H1 (cell line): ENCODE measurements at regions of chr6 and their contacts with region 1.

Region 1: GRCh38 chr6:83215131-83216047 is 22.2 kb downstream of the RWDD2A start:
- DNase-seq: no peak
- H3K4me3 ChIP-seq: no peak overlapping the region
- H3K27ac ChIP-seq: no peak overlapping the region
- H3K4me1 ChIP-seq: no peaks in the 10 kb centered on the region
- H3K27me3 ChIP-seq: no peaks in the 10 kb centered on the region
- CTCF ChIP-seq: peak; percentile 55 to 83 (median 80)
- EP300 ChIP-seq: no peak
- POLR2A ChIP-seq: no peak
- RAD21 ChIP-seq: peak; percentile 78 to 88

Region 2: GRCh38 chr6:83019741-83020140 is 195.6 kb before region 1 on chr6:
- CTCF ChIA-PET with region 1: no interaction called
- POLR2A ChIA-PET with region 1: no interaction called
- DNase-seq: peak in 1 of 2 experiments; percentile 1
- H3K4me3 ChIP-seq: no peak overlapping the region
- H3K27ac ChIP-seq: no peak overlapping the region
- H3K4me1 ChIP-seq: no peaks in the 10 kb centered on the region
- H3K27me3 ChIP-seq: peaks cover 0 to 1% (median 0%) of the 10 kb centered on the region in 4 experiments; a peak in 1 of 7 replicates
- CTCF ChIP-seq: no peak
- EP300 ChIP-seq: no peak
- POLR2A ChIP-seq: no peak
- RAD21 ChIP-seq: no peak

Region 3: GRCh38 chr6:83042467-83043053 is 172.8 kb before region 1 on chr6:
- CTCF ChIA-PET with region 1: no interaction called
- POLR2A ChIA-PET with region 1: no interaction called
- DNase-seq: no peak
- H3K4me3 ChIP-seq: no peak overlapping the region
- H3K27ac ChIP-seq: no peak overlapping the region
- H3K4me1 ChIP-seq: peaks cover 0 to 5% (median 0%) of the 10 kb centered on the region in 4 experiments; a peak in 2 of 7 replicates
- H3K27me3 ChIP-seq: no peaks in the 10 kb centered on the region
- CTCF ChIP-seq: no peak
- EP300 ChIP-seq: no peak
- POLR2A ChIP-seq: no peak
- RAD21 ChIP-seq: no peak

Region 4: GRCh38 chr6:83067448-83068413 is 147.7 kb before region 1 on chr6 and contains the start of gene DOP1A:
- CTCF ChIA-PET with region 1: interaction called, 31 read pairs
- POLR2A ChIA-PET with region 1: no interaction called
- DNase-seq: peak; percentile 85 to 97
- H3K4me3 ChIP-seq: peak within 1 kb of the TSS; percentile 53 to 85 (median 66)
- H3K27ac ChIP-seq: peak within 1 kb of the TSS; percentile 87
- H3K4me1 ChIP-seq: peaks cover 0 to 15% (median 4%) of the 10 kb centered on the region in 4 experiments; a peak in 2 of 7 replicates
- H3K27me3 ChIP-seq: no peaks in the 10 kb centered on the region
- CTCF ChIP-seq: peak; percentile 87 to 94 (median 92)
- EP300 ChIP-seq: peak in 1 of 2 experiments; percentile 56; a peak in 1 of 3 replicates
- POLR2A ChIP-seq: peak; percentile 67 to 72; a peak in 2 of 3 replicates
- RAD21 ChIP-seq: peak; percentile 90 to 95
- total RNA-seq, gene DOP1A: 14.7 and 15.9 TPM in 2 replicates

Region 5: GRCh38 chr6:83132121-83132520 is 83.3 kb before region 1 on chr6:
- CTCF ChIA-PET with region 1: no interaction called
- POLR2A ChIA-PET with region 1: no interaction called
- DNase-seq: no peak
- H3K4me3 ChIP-seq: no peak overlapping the region
- H3K27ac ChIP-seq: no peak overlapping the region
- H3K4me1 ChIP-seq: no peaks in the 10 kb centered on the region
- H3K27me3 ChIP-seq: no peaks in the 10 kb centered on the region
- CTCF ChIP-seq: no peak
- EP300 ChIP-seq: no peak
- POLR2A ChIP-seq: no peak
- RAD21 ChIP-seq: no peak

Region 6: DNA sequence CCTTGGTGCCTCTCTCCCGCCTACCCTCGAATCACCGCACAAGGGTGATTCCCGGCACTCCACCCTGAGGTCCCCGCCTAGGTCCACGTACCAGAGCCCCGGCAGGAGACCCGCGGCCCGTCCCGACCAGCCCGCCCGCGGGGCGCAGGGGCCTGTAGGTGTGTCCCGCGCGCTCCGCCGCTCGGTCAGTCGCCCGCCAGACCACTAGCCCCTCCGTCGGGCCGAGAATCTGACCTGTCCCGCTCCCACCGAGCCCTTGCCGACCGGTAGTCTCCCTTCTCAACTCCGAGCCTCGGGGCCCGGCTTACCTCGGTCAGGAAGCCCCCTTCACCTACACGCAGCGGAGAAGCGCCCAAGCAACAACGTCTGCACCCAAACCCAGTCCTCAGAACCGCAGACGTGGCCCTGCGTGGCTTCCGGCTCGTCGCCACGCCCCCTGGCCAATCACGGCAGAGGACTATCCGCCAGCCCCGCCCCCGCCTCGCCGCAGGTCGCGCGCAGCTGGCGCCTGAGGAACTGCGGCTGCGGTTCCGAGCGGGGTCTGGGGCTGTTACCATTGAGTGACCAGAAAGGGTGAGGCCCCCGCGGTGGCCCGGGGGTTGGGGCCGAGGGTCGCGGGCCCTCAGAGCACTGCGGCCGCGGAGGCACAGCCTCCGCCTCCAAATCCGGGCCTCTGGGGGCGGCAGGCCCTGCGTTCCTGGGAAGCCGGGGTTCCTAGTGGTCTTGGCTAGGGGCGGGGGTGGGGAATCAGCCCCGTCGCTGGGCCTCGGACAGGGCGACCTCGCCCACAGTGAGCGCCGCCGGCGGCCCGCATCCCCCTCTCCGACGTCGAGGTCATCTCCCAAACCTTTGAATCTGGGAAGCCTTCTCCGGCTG is 22.3 kb before region 1 on chr6 and contains the starts of genes PGM3 and RWDD2A:
- CTCF ChIA-PET with region 1: interaction called, 42 read pairs
- POLR2A ChIA-PET with region 1: interaction called, 4 read pairs
- DNase-seq: peak; percentile 54 to 92
- H3K4me3 ChIP-seq: peak within 1 kb of the TSS; percentile 79 to 98 (median 84)
- H3K27ac ChIP-seq: peak within 1 kb of the TSS; percentile 72; the same call in 1 of the 2 replicates
- H3K4me1 ChIP-seq: no peaks in the 10 kb centered on the region
- H3K27me3 ChIP-seq: no peaks in the 10 kb centered on the region
- CTCF ChIP-seq: no peak
- EP300 ChIP-seq: 0 out of 3 replicates have a peak, but pooled peaks of 1 of the 2 experiments have one; percentile 13
- POLR2A ChIP-seq: peak; percentile 36 to 65; a peak in 2 of 3 replicates
- RAD21 ChIP-seq: no peak
- total RNA-seq, gene PGM3: 55.2 and 60.5 TPM in 2 replicates
- total RNA-seq, gene RWDD2A: 3.3 and 3.6 TPM in 2 replicates

Region 7: DNA sequence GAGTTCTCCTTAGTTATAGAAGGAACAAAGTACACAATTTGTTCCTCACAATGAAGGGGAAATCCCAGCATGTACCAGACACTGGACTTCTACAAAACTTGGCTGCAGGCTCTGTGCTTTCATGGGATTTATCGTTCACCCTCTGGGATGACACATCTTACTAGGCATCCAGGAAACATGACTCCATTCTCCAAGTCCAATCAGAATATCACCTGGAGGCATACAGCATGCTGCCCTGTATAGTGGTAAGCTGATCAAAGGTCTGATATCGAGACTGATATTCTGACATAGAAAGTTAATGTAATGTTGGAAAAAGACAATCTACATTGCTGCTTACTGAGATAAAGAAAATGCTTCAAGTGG is 15.5 kb before region 1 on chr6:
- CTCF ChIA-PET with region 1: interaction called, 42 read pairs
- POLR2A ChIA-PET with region 1: no interaction called
- DNase-seq: no peak
- H3K4me3 ChIP-seq: no peak overlapping the region
- H3K27ac ChIP-seq: no peak overlapping the region
- H3K4me1 ChIP-seq: no peaks in the 10 kb centered on the region
- H3K27me3 ChIP-seq: no peaks in the 10 kb centered on the region
- CTCF ChIP-seq: no peak
- EP300 ChIP-seq: no peak
- POLR2A ChIP-seq: no peak
- RAD21 ChIP-seq: no peak

Region 8: DNA sequence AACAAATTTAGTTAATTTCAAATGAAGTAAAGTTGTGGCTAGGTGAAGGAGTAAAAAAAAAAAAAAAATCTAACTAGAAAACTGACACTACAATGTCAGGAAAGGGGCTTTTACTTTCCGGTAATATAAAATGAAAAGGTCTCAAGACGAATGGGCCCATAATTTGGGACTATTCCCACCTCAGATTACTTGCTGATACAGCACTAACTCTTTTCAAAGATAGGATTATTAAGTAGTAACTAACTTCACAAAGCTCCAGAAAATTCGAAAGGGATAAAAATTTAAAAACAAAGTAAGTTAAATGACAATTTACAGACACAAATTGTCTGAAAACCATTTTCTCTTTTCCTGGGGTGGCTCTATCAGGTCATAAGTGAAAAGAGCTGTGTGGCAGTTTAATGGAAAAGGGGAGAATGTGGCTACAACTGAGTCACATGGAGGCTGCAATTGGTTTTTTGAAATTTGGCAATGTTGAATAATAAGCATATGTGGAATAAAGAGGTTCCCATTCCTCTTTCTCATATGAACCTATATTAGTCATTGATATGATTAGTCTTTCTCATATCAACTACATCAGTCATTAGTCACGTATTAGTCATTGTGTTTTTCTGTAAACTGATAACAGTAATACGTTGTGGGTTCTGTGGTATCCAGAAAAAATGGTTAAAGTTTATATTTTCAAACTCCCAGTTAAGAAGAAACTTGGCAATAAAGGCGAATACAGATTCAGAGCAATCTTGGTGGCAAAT is 55.8 kb after region 1 on chr6:
- CTCF ChIA-PET with region 1: no interaction called
- POLR2A ChIA-PET with region 1: no interaction called
- DNase-seq: no peak
- H3K4me3 ChIP-seq: no peak overlapping the region
- H3K27ac ChIP-seq: no peak overlapping the region
- H3K4me1 ChIP-seq: no peaks in the 10 kb centered on the region
- H3K27me3 ChIP-seq: no peaks in the 10 kb centered on the region
- CTCF ChIP-seq: no peak
- EP300 ChIP-seq: no peak
- POLR2A ChIP-seq: no peak
- RAD21 ChIP-seq: no peak

Region 9: DNA sequence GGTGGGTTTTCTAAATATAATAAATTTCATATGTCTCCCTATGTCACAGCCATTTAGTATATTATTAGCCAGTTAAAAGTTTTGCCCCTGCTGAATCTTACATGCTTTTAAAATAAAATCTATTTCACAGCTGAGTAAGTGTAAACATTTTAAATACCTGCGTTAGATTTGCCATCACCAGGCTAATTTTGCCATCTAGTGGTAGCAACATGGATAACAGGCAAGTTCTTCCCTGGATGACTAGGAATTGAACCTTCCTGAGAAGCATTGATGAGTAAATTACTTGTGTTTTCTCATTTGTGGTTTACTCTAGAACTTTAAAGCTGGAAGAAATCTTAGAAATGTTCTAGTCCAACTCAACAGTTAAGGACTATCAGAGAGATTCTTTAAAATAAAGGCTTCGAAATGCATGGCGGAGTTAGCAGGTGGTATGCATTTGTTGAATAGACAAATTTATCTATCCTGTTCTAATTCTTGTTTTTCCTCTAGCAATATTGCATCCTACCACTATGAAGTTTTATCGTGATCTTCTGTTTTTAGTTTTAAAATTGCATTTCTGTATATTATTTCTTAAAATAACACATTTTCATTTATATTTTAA is 299.6 kb after region 1 on chr6:
- CTCF ChIA-PET with region 1: interaction called, 310 read pairs
- POLR2A ChIA-PET with region 1: interaction called, 3 read pairs
- DNase-seq: no peak
- H3K4me3 ChIP-seq: no peak overlapping the region
- H3K27ac ChIP-seq: no peak overlapping the region
- H3K4me1 ChIP-seq: peaks cover 0 to 4% (median 0%) of the 10 kb centered on the region in 4 experiments; a peak in 3 of 7 replicates
- H3K27me3 ChIP-seq: no peaks in the 10 kb centered on the region
- CTCF ChIP-seq: peak in 2 of 3 experiments; percentile 69; a peak in 3 of 4 replicates
- EP300 ChIP-seq: no peak
- POLR2A ChIP-seq: no peak
- RAD21 ChIP-seq: peak; percentile 92